PC-3 (cell line): ENCODE measurements at regions of chr2 and their contacts with region 1.

Region 1: GRCh38 chr2:25700221-25700660 is 26.9 kb upstream of the DTNB start:
- DNase-seq: peak; percentile 94
- ATAC-seq: peak; percentile 86
- H3K4me3 ChIP-seq: no peak overlapping the region
- H3K27ac ChIP-seq: no peak overlapping the region
- H3K4me1 ChIP-seq: peaks cover 32% of the 10 kb centered on the region
- H3K27me3 ChIP-seq: no peaks in the 10 kb centered on the region
- CTCF ChIP-seq: peak; percentile 84

Region 2: DNA sequence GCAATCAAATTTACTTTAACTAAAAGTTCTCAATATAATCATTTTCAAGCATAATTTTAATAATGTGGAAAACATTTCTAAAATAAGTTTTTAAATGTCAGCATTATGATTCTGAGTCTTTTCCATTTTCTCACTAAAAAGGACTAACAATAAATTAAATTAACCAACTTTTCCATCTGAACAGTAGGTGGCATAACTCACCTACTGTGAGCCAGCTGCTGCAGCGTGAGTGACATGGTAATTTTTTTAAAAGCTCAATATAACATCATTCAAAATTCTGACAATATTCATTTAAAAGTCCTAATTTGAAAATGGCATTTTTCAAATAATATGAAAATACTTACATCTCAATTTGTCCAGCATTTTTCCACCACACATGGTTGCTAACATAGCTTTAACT is 93.3 kb before region 1 on chr2:
- CTCF ChIA-PET with region 1: interaction called, 19 read pairs
- POLR2A ChIA-PET with region 1: no interaction called
- intact Hi-C with region 1: loop called (anchors 1 kb)
- DNase-seq: peak; percentile 60
- ATAC-seq: peak; percentile 55
- H3K4me3 ChIP-seq: no peak overlapping the region
- H3K27ac ChIP-seq: no peak overlapping the region
- H3K4me1 ChIP-seq: no peaks in the 10 kb centered on the region
- H3K27me3 ChIP-seq: no peaks in the 10 kb centered on the region
- CTCF ChIP-seq: peak; percentile 91

Region 3: GRCh38 chr2:25618642-25619037 is 81.6 kb before region 1 on chr2:
- CTCF ChIA-PET with region 1: interaction called, 14 read pairs
- POLR2A ChIA-PET with region 1: interaction called, 6 read pairs
- intact Hi-C with region 1: loop called (anchors 1 kb)
- DNase-seq: peak; percentile 96
- ATAC-seq: peak; percentile 94
- H3K4me3 ChIP-seq: peak overlapping the region; percentile 43
- H3K27ac ChIP-seq: peak overlapping the region; percentile 88
- H3K4me1 ChIP-seq: peaks cover 23% of the 10 kb centered on the region
- H3K27me3 ChIP-seq: no peaks in the 10 kb centered on the region
- CTCF ChIP-seq: no peak

Region 4: GRCh38 chr2:25651071-25651470 is 49.2 kb before region 1 on chr2:
- CTCF ChIA-PET with region 1: no interaction called
- POLR2A ChIA-PET with region 1: no interaction called
- intact Hi-C with region 1: no loop called
- DNase-seq: no peak
- ATAC-seq: no peak
- H3K4me3 ChIP-seq: no peak overlapping the region
- H3K27ac ChIP-seq: no peak overlapping the region
- H3K4me1 ChIP-seq: no peaks in the 10 kb centered on the region; the same call in 1 of the 2 replicates
- H3K27me3 ChIP-seq: no peaks in the 10 kb centered on the region
- CTCF ChIP-seq: no peak

Region 5: DNA sequence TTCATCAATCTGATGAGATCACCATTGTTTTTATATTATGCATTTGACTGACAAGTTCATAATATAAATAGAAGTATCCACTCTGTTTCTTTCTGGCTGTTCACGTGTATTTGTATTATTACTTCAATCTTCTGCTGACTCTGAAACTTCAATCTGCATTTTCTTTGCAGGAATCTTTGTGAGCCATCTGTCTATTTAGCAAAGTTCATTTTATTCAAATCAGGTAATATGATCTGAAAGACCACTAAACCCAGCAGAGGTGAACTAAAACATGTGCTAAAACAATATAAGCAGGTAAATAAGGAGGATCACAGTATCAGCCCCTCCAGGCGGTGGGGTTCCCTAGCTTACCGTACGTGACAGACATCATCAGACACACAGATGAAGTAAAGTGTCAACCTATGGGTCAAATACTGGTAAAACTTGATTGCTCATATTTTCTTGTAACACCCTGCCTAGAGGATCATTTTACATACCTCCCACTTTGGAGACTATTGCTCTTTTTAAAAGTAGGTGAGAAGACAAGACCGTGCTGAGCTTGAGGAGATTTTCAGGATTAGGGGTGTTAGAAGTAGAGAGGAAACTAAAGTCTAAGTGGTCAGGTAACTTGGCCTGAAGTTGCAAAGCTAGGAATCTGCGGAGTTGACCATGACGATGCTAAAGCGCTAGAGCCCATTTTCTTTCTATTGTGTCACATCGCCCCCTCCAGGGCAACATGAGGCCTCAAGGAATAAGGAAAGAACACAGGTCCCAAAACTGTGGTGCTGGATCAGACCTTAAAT is 35.9 kb before region 1 on chr2:
- CTCF ChIA-PET with region 1: interaction called, 13 read pairs
- POLR2A ChIA-PET with region 1: interaction called, 7 read pairs
- intact Hi-C with region 1: no loop called
- DNase-seq: peak; percentile 80
- ATAC-seq: peak; percentile 98
- H3K4me3 ChIP-seq: peak overlapping the region; percentile 56
- H3K27ac ChIP-seq: peak overlapping the region; percentile 12; the same call in 1 of the 2 replicates
- H3K4me1 ChIP-seq: peaks cover 11% of the 10 kb centered on the region
- H3K27me3 ChIP-seq: no peaks in the 10 kb centered on the region
- CTCF ChIP-seq: peak; percentile 95

Region 6: GRCh38 chr2:25673300-25674076 is 26.8 kb before region 1 on chr2 and contains the start of gene DTNB:
- CTCF ChIA-PET with region 1: interaction called, 3 read pairs
- POLR2A ChIA-PET with region 1: no interaction called
- intact Hi-C with region 1: loop called (anchors 1 kb)
- DNase-seq: peak; percentile 89
- ATAC-seq: peak; percentile 67
- H3K4me3 ChIP-seq: peak within 1 kb of the TSS; percentile 82
- H3K27ac ChIP-seq: no peak within 1 kb of the TSS
- H3K4me1 ChIP-seq: peaks cover 26% of the 10 kb centered on the region
- H3K27me3 ChIP-seq: no peaks in the 10 kb centered on the region
- CTCF ChIP-seq: no peak
- total RNA-seq, gene DTNB: 23.1 and 23.6 TPM in 2 replicates

Region 7: GRCh38 chr2:26008822-26009566 is 308.8 kb after region 1 on chr2:
- CTCF ChIA-PET with region 1: no interaction called
- POLR2A ChIA-PET with region 1: no interaction called
- intact Hi-C with region 1: no loop called
- DNase-seq: peak; percentile 95
- ATAC-seq: peak; percentile 55
- H3K4me3 ChIP-seq: peak overlapping the region; percentile 11; the same call in 1 of the 2 replicates
- H3K27ac ChIP-seq: peak overlapping the region; percentile 94
- H3K4me1 ChIP-seq: peaks cover 50% of the 10 kb centered on the region
- H3K27me3 ChIP-seq: no peaks in the 10 kb centered on the region
- CTCF ChIP-seq: no peak